GM12878 (cell line): ENCODE measurements at regions of chr1 and their contacts with region 1.

Region 1: DNA sequence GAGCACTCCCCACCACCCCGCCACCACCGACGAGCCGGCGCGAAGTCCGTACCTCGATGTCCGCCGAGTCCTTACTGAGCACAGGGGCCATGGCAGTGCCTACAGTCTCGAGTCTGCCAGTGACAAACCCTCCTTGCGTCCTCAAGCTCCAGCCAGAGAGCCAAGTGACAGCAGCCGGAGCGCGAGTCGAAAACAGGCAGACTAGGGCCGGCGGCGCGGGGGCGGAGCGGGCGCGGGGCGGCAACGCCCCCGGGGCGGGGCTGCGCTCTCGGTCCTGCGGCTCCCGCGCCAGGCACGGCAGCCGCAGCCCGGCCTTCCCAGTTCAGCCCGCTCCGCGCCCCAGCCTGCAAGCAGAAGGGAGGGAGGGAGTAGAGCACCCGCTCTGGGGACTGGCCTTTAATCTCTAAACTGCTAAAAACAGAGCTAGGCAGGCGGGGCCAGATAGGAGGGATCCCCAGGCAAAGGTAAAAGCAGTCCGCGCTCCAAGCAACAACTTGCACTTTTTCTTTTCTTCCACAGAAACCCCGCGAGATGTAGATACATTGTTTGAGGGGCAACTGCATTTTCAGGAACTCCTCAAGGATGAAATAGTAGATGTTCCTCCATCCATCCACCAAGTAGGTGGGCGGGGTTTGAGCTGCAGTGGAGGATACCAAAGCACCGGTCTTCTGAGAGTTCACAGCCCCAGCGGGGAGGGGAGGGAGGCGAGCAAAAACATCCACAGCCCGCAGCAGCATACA is at the start of gene DPYD:
- DNase-seq: peak; percentile 42
- ATAC-seq: peak; percentile 90
- H3K4me3 ChIP-seq: peak within 1 kb of the TSS; percentile 88
- H3K27ac ChIP-seq: peak within 1 kb of the TSS; percentile 81
- H3K4me1 ChIP-seq: peaks cover 2% of the 10 kb centered on the region; the same call in 1 of the 2 replicates
- H3K27me3 ChIP-seq: no peaks in the 10 kb centered on the region
- CTCF ChIP-seq: no peak
- EP300 ChIP-seq: no peak
- POLR2A ChIP-seq: peak; percentile 96
- RAD21 ChIP-seq: 0 out of 2 replicates have a peak, but pooled peaks have one; percentile 10
- polyA plus RNA-seq, gene DPYD: 5.7 to 6.5 TPM

Region 2: GRCh38 chr1:97791251-97791650 is 129.8 kb before region 1 on chr1:
- CTCF ChIA-PET with region 1: interaction called, 4 read pairs
- POLR2A ChIA-PET with region 1: interaction called, 3 read pairs
- RAD21 ChIA-PET with region 1: interaction called, 3 read pairs
- SMC1A ChIA-PET with region 1: interaction called, 28 read pairs
- in situ Hi-C with region 1: no loop called
- intact Hi-C with region 1: no loop called
- DNase-seq: peak; percentile 45
- ATAC-seq: peak; percentile 89
- H3K4me3 ChIP-seq: no peak overlapping the region
- H3K27ac ChIP-seq: no peak overlapping the region
- H3K4me1 ChIP-seq: peaks cover 10% of the 10 kb centered on the region; the same call in 1 of the 2 replicates
- H3K27me3 ChIP-seq: no peaks in the 10 kb centered on the region
- CTCF ChIP-seq: no peak
- EP300 ChIP-seq: peak in 1 of 2 experiments; percentile 46; a peak in 2 of 4 replicates
- POLR2A ChIP-seq: no peak
- RAD21 ChIP-seq: no peak

Region 3: GRCh38 chr1:97849345-97850340 is 71.4 kb before region 1 on chr1:
- CTCF ChIA-PET with region 1: interaction called, 7 read pairs
- POLR2A ChIA-PET with region 1: interaction called, 24 read pairs
- RAD21 ChIA-PET with region 1: interaction called, 36 read pairs
- SMC1A ChIA-PET with region 1: interaction called, 38 read pairs
- in situ Hi-C with region 1: no loop called
- intact Hi-C with region 1: loop called (anchors 5 kb)
- DNase-seq: no peak
- ATAC-seq: peak; percentile 60
- H3K4me3 ChIP-seq: no peak overlapping the region
- H3K27ac ChIP-seq: peak overlapping the region; percentile 20; the same call in 1 of the 2 replicates
- H3K4me1 ChIP-seq: peaks cover 6% of the 10 kb centered on the region; the same call in 1 of the 2 replicates
- H3K27me3 ChIP-seq: no peaks in the 10 kb centered on the region
- CTCF ChIP-seq: no peak
- EP300 ChIP-seq: no peak
- POLR2A ChIP-seq: no peak
- RAD21 ChIP-seq: no peak

Region 4: DNA sequence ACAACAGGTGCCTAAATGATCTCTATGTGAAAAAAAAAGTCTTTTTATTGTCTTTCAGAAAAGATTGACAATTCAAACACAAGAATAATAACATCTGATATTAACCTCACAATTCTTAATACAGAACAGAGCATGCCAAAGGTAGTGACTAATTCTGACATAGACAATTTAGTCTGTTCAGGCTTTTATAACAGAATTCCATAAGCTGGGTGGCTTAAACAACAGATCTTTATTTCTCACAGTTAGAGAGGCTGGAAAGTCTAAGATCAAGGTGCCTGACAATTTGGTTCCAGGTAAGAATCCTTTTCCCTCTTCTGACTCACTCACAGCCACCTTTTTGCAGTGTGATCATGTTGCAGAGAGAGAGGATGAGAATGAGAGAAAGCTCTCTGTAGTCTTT is 27.2 kb before region 1 on chr1:
- CTCF ChIA-PET with region 1: no interaction called
- POLR2A ChIA-PET with region 1: no interaction called
- RAD21 ChIA-PET with region 1: interaction called, 15 read pairs
- SMC1A ChIA-PET with region 1: interaction called, 17 read pairs
- in situ Hi-C with region 1: no loop called
- intact Hi-C with region 1: no loop called
- DNase-seq: no peak
- ATAC-seq: no peak
- H3K4me3 ChIP-seq: no peak overlapping the region
- H3K27ac ChIP-seq: no peak overlapping the region
- H3K4me1 ChIP-seq: no peaks in the 10 kb centered on the region
- H3K27me3 ChIP-seq: no peaks in the 10 kb centered on the region
- CTCF ChIP-seq: no peak
- EP300 ChIP-seq: no peak
- POLR2A ChIP-seq: no peak
- RAD21 ChIP-seq: no peak

Region 5: DNA sequence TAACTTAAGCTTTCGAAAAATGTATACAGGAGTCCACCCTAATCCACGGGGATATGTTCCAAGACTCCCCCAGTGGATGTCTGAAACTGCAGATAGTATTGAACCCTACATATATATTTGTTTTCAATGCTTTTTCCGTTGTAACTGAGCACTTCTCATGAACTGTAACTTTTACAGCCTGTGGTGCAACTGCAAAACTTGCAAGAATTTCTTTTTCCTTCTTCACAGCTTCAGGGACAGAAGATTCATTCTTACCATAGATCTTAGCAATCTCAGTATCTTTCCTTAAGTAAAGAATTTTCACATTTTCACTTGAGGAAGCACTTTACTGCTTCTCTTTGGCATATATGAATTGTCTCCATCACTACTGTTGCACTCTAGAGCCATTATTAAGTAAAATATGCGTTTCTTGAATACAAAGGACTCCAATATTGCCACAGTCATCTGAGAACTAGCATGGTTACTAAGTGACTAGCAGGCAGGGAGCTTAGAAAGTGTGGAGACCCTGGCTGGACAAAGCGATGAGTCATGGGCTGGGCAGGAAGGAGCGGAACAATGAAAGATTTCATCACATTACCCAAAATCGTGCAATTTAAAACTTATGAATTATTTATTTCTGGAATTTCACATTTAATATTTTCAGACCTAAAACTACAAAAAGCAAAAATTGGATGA is 14.3 kb before region 1 on chr1:
- CTCF ChIA-PET with region 1: interaction called, 7 read pairs
- POLR2A ChIA-PET with region 1: interaction called, 5 read pairs
- RAD21 ChIA-PET with region 1: interaction called, 12 read pairs
- SMC1A ChIA-PET with region 1: interaction called, 18 read pairs
- in situ Hi-C with region 1: no loop called
- intact Hi-C with region 1: no loop called
- DNase-seq: no peak
- ATAC-seq: peak; percentile 32; the same call in 2 of the 3 replicates
- H3K4me3 ChIP-seq: no peak overlapping the region
- H3K27ac ChIP-seq: no peak overlapping the region
- H3K4me1 ChIP-seq: no peaks in the 10 kb centered on the region
- H3K27me3 ChIP-seq: no peaks in the 10 kb centered on the region
- CTCF ChIP-seq: no peak
- EP300 ChIP-seq: no peak
- POLR2A ChIP-seq: no peak
- RAD21 ChIP-seq: no peak

Region 6: DNA sequence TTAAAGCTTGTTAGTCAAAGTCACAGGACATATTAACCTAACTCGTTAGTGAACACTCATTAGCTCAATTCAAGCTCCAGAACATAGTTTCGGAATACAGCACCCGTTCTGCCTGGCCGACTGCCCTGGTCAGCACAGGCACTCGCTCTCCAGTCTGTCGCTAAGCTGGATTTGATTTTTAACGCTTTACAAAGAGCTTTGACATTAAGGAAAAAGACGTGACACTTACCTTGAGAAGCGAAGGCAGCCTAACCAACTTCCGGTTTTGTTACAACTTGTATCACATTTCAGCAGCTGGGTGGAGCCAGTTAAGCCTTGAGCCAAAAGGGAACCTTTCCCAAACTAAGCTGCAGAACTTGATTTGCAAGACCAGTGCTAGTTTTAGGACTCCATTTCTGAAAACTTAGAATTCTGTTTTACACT is 1845.4 kb after region 1 on chr1 and contains the start of gene FRRS1:
- CTCF ChIA-PET with region 1: no interaction called
- POLR2A ChIA-PET with region 1: no interaction called
- RAD21 ChIA-PET with region 1: no interaction called
- SMC1A ChIA-PET with region 1: no interaction called
- in situ Hi-C with region 1: loop called (anchors 25 kb)
- intact Hi-C with region 1: no loop called
- DNase-seq: peak; percentile 85
- ATAC-seq: peak; percentile 86
- H3K4me3 ChIP-seq: peak within 1 kb of the TSS; percentile 96
- H3K27ac ChIP-seq: peak within 1 kb of the TSS; percentile 90
- H3K4me1 ChIP-seq: peaks cover under 1% of the 10 kb centered on the region; the same call in 1 of the 2 replicates
- H3K27me3 ChIP-seq: no peaks in the 10 kb centered on the region
- CTCF ChIP-seq: peak in 2 of 3 experiments; percentile 5 to 19; a peak in 2 of 6 replicates
- EP300 ChIP-seq: no peak
- POLR2A ChIP-seq: peak; percentile 58
- RAD21 ChIP-seq: peak; percentile 13; the same call in 1 of the 2 replicates
- polyA plus RNA-seq, gene FRRS1: 0.22 to 0.55 TPM